ENCODE measurements at regions of chr3 and their contacts with region 1.

Region 1: DNA sequence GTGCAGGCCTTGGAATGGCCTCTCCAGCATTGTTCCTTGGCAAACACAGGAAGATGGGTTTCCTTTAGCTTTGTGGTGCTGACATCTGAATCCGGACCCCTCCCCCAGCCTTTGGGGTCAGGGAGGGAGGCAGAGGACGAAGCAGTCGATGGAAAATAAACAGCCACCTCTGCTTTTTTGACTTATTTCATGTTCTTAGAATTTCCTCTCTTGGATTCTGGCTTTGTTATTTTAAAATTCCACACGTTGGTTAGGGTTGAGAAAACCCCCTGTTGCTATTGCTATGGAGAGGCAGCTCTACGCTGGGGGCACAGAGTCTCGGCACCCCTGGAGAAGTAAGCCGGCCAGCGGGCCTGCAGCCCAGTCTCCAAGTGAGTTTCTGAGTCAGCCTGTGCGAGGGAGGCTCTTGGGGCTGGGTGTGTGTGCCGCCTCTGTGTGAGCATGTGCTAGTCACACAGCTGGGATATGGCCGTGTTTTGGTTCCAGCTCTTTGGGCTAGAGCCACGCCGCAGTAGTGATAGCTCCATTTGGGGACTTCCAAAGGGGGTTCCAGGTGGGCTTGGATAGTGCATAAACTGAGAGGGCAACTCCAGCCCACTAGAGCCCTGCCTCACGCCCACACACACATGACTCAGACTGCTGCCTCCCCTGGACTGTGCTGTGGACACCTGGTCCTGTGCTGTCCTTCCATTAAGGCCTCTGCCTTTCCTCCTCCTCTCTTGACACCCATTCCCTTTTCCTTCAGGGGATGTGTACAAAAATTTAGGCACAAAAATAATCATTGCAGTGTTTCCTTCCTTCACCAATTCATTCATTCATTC is 58.8 kb downstream of the AMOTL2 start:
- DNase-seq: peak; percentile 91 to 94
- ATAC-seq: peak; percentile 86
- H3K4me3 ChIP-seq: no peak overlapping the region
- H3K27ac ChIP-seq: peak overlapping the region; percentile 20 to 43
- H3K4me1 ChIP-seq: peaks cover 0 to 10% of the 10 kb centered on the region in 2 donors
- H3K27me3 ChIP-seq: no peaks in the 10 kb centered on the region

Region 2: DNA sequence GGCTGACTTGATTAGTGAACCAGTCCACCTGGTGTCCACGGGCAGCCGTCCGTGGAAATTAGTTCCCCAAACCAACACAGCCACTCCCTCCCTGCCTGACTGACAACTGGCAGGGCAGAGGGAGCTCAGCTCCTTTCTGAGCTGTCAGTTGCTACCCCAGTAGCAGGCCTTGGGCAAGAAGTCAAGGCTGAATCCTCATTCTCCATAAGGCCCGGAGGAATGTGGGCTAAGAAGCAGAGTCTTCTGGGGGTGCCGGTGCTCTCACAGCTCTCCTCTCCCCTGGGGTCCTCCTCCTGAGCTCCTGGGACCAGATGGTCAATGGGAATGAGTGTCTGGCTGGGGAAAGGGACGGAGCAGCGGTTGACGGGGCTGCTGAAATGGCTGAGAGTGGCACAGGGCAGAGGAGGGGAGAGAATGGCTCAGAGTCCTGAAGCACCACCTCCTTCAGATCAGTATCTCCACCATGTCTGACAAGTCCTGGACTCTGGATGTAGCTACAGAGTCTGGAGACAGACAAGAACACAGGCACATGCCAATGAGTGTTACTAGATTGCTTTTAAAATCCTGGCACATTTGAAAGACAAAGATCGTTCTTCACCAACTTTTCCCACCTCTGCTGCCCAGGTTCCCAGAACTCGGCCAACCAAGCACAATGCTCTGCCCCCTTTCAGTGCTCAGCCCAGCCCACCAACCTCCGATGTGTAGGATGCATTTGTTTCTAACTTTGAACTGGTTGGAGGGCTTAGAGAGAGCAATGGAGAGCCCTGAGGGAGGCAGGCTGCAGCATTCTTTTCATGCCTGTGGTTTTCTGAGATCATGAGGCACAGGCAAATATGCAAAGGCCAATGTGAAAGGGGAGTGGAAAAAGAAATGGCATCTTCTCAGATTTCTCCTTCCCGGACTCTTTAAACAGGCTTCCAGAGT is 42.0 kb after region 1 on chr3:
- intact Hi-C with region 1: loop called in 1 of 2 experiments (anchors 2 kb)
- DNase-seq: peak; percentile 60 to 70
- ATAC-seq: peak; percentile 73
- H3K4me3 ChIP-seq: no peak overlapping the region
- H3K27ac ChIP-seq: peak overlapping the region; percentile 19 to 78
- H3K4me1 ChIP-seq: peaks cover 0 to 6% of the 10 kb centered on the region in 2 donors
- H3K27me3 ChIP-seq: no peaks in the 10 kb centered on the region

Measured in aorta (tissue), 5 donors.